Mammary epithelial cell (primary cell): ENCODE measurements at regions of chr19 and their contacts with region 1.

Region 1: DNA sequence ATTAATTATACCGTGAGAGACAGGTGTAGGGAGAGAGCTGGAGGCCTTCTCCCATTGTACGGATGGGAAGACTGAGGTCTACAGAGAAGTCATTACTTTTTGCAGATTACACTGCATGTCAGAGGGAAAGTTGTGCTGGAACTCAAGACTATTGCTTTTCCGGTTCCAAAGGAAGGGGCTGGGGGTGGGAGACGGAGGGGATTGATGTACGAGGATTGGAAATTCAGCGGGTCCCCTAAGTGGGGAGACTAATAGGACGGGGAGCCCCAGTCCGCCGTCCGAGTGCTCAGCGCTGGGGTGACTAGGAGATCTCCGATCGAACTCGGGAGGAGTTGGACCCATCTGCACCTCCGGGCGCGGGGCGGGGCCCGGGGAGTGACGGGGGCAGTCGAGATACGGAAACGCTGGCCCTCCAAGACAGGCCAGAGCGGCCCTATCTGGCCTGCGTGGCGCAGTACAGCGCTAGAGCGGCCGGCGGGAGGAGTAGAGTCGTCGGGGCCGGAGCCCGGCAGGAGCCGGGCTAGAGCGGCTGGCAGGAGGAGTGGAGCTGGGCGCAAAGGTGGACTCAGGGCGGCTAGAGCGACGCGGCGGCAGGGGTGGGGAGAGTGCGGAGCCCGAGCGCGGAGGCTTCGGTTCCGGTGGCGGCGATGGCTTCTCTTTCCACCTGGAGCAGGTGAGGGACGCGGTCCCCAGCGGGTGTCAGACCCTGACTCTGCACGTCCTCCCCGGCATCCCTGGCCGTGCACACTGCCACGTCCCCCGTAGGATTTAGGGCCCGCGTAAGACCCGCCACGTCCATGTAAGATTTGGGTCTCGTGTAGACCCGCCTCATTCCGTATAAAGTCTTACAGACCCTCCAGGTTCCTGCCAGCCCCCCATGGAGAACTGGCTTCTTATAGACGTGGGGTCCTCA is 1.1 kb downstream of the ARHGEF1 start:
- DNase-seq: peak; percentile 97
- H3K4me3 ChIP-seq: peak overlapping the region; percentile 70 to 96 (median 87)
- H3K27ac ChIP-seq: peak overlapping the region; percentile 77
- H3K4me1 ChIP-seq: peaks cover 41% of the 10 kb centered on the region
- H3K27me3 ChIP-seq: no peaks in the 10 kb centered on the region
- CTCF ChIP-seq: peak in 1 of 2 donors; percentile 35

Region 2: DNA sequence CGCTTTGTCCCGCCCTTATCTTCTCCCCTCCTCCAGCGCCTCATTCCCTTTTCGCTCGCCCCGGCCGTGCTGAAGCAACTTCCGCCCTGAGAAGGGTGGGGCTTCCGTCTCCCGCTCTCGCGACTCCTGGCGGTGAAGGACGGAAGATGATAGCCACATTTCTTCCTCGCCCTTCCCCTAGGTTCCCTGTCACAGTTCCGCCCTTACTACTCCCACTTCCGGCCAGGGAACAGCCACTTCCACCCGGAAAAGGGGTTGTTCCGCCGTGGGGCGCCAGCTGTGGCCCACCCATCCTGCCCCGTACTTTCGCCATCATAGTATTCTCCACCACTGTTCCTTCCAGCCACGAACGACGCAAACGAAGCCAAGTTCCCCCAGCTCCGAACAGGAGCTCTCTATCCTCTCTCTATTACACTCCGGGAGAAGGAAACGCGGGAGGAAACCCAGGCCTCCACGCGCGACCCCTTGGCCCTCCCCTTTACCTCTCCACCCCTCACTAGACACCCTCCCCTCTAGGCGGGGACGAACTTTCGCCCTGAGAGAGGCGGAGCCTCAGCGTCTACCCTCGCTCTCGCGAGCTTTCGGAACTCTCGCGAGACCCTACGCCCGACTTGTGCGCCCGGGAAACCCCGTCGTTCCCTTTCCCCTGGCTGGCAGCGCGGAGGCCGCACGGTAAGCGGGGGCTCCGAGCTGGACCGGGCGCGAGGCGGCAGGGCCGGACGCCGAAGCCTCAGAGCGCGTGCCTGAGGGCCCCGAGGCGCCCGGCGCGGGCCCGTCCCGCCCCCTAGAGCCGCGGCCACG is 24.3 kb before region 1 on chr19 and contains the start of gene RPS19:
- CTCF ChIA-PET with region 1: no interaction called
- dilution Hi-C with region 1: no loop called
- in situ Hi-C with region 1: no loop called
- intact Hi-C with region 1: loop called (anchors 1 kb)
- DNase-seq: peak; percentile 99
- H3K4me3 ChIP-seq: peak within 1 kb of the TSS; percentile 77 to 92 (median 84)
- H3K27ac ChIP-seq: peak within 1 kb of the TSS; percentile 93
- H3K4me1 ChIP-seq: peaks cover 30% of the 10 kb centered on the region
- H3K27me3 ChIP-seq: no peaks in the 10 kb centered on the region
- CTCF ChIP-seq: peak; percentile 43 to 62
- total RNA-seq, gene RPS19: 530 to 2,153 TPM

Region 3: GRCh38 chr19:41872775-41873647 is 11.1 kb before region 1 on chr19:
- CTCF ChIA-PET with region 1: interaction called, 11 read pairs
- dilution Hi-C with region 1: no loop called
- in situ Hi-C with region 1: no loop called
- intact Hi-C with region 1: loop called (anchors 1 kb)
- DNase-seq: peak; percentile 77
- H3K4me3 ChIP-seq: no peak overlapping the region
- H3K27ac ChIP-seq: no peak overlapping the region
- H3K4me1 ChIP-seq: no peaks in the 10 kb centered on the region
- H3K27me3 ChIP-seq: no peaks in the 10 kb centered on the region
- CTCF ChIP-seq: peak; percentile 79 to 83

Region 4: GRCh38 chr19:41928221-41928683 is 44.2 kb after region 1 on chr19 and contains the start of gene ERFL:
- CTCF ChIA-PET with region 1: no interaction called
- dilution Hi-C with region 1: no loop called
- in situ Hi-C with region 1: no loop called
- intact Hi-C with region 1: loop called (anchors 2 kb)
- DNase-seq: no peak
- H3K4me3 ChIP-seq: peak within 1 kb of the TSS in 2 of 3 experiments; percentile 36 to 38
- H3K27ac ChIP-seq: no peak within 1 kb of the TSS
- H3K4me1 ChIP-seq: no peaks in the 10 kb centered on the region
- H3K27me3 ChIP-seq: peaks cover 30% of the 10 kb centered on the region
- CTCF ChIP-seq: no peak
- total RNA-seq, gene ERFL: not detected

Region 5: GRCh38 chr19:41934849-41935374 is 50.8 kb after region 1 on chr19:
- CTCF ChIA-PET with region 1: no interaction called
- dilution Hi-C with region 1: no loop called
- in situ Hi-C with region 1: no loop called
- intact Hi-C with region 1: loop called (anchors 1 kb)
- DNase-seq: peak; percentile 44
- H3K4me3 ChIP-seq: no peak overlapping the region
- H3K27ac ChIP-seq: no peak overlapping the region
- H3K4me1 ChIP-seq: peaks cover 11% of the 10 kb centered on the region
- H3K27me3 ChIP-seq: peaks cover 24% of the 10 kb centered on the region
- CTCF ChIP-seq: peak; percentile 88 to 91

Region 6: DNA sequence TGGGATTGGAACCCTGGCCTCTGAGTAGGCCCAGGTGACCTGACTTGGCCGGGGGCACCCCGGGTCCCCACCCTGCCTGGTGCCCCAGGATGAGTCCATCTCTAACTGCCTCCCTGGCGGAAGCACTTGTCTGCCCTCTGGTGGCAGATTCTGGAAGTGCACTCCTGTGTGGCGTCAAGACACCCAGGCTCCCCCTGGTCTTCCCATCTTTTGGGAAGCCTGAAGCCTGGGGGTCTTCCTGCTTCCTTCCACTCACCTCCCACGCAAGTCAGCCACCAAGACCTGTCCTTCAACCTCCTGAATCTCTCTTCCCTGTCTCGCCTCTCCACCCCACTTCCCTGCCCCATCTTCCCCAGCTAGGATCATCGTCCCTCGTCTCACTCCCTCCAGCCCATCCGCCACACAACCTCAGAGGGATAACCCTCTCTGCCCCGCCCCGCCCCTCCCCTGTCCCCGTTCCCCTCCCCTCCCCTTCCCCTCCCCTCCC is 67.7 kb after region 1 on chr19:
- CTCF ChIA-PET with region 1: no interaction called
- dilution Hi-C with region 1: loop called (anchors 5 kb)
- in situ Hi-C with region 1: loop called (anchors 5 kb)
- intact Hi-C with region 1: loop called (anchors 1 kb)
- DNase-seq: peak; percentile 48
- H3K4me3 ChIP-seq: no peak overlapping the region
- H3K27ac ChIP-seq: no peak overlapping the region
- H3K4me1 ChIP-seq: no peaks in the 10 kb centered on the region
- H3K27me3 ChIP-seq: no peaks in the 10 kb centered on the region
- CTCF ChIP-seq: peak; percentile 97 to 99

Region 7: DNA sequence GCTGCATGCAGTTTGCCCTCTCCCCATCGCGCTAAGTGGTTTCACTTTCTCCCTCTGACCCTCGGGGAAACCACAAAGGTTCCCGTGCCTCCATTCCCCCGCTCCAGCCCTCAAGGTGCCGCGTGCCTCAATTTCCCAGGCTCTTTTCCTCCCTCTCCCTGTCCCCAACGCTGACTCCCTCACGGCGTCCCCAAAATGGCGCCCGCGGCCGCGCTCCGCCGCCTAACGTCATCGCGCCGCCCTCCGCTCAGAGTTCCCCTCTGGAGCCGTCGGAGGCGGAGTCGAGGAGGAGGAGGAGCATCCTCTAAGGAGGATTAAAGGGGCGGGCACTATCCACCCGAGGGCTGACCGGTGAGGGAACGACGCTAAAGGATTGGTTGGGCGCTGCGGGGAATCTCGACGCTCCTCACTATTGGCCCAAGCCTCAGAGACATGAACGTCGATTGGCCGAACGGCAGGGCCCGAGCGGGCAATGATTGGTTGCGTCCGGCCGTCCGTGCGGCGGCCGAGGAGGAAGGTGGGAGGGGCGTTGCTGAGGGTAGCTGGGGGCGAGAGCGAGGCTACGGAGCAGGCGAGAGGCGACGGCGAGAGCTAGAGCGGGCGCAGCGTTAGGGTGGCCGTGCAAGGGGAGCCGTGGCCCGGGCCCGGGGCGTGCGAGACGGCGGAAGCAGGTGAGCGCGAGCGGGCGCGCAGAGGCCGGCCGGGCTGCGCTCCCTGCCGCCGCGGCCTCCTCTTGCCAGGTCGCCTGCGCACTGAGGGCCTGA is 191.7 kb after region 1 on chr19 and contains the start of gene ZNF574:
- CTCF ChIA-PET with region 1: no interaction called
- dilution Hi-C with region 1: no loop called
- in situ Hi-C with region 1: no loop called
- intact Hi-C with region 1: loop called (anchors 5 kb)
- DNase-seq: peak; percentile 100
- H3K4me3 ChIP-seq: peak within 1 kb of the TSS; percentile 83 to 89 (median 86)
- H3K27ac ChIP-seq: peak within 1 kb of the TSS; percentile 94
- H3K4me1 ChIP-seq: peaks cover 29% of the 10 kb centered on the region
- H3K27me3 ChIP-seq: no peaks in the 10 kb centered on the region
- CTCF ChIP-seq: no peak
- total RNA-seq, gene ZNF574: 16.8 to 19.7 TPM

Region 8: GRCh38 chr19:42154471-42155323 is 270.6 kb after region 1 on chr19:
- CTCF ChIA-PET with region 1: no interaction called
- dilution Hi-C with region 1: no loop called
- in situ Hi-C with region 1: no loop called
- intact Hi-C with region 1: no loop called
- DNase-seq: no peak
- H3K4me3 ChIP-seq: no peak overlapping the region
- H3K27ac ChIP-seq: no peak overlapping the region
- H3K4me1 ChIP-seq: no peaks in the 10 kb centered on the region
- H3K27me3 ChIP-seq: no peaks in the 10 kb centered on the region
- CTCF ChIP-seq: no peak